Activated CD8-positive, alpha-beta memory T cell treated with anti-CD3 and anti-CD28 coated beads, Interleukin-2, amount 10 ng/mL, durations not matched to agents 7 days and 5 days (primary cell): ENCODE measurements at regions of chr10 and their contacts with region 1.

Region 1: DNA sequence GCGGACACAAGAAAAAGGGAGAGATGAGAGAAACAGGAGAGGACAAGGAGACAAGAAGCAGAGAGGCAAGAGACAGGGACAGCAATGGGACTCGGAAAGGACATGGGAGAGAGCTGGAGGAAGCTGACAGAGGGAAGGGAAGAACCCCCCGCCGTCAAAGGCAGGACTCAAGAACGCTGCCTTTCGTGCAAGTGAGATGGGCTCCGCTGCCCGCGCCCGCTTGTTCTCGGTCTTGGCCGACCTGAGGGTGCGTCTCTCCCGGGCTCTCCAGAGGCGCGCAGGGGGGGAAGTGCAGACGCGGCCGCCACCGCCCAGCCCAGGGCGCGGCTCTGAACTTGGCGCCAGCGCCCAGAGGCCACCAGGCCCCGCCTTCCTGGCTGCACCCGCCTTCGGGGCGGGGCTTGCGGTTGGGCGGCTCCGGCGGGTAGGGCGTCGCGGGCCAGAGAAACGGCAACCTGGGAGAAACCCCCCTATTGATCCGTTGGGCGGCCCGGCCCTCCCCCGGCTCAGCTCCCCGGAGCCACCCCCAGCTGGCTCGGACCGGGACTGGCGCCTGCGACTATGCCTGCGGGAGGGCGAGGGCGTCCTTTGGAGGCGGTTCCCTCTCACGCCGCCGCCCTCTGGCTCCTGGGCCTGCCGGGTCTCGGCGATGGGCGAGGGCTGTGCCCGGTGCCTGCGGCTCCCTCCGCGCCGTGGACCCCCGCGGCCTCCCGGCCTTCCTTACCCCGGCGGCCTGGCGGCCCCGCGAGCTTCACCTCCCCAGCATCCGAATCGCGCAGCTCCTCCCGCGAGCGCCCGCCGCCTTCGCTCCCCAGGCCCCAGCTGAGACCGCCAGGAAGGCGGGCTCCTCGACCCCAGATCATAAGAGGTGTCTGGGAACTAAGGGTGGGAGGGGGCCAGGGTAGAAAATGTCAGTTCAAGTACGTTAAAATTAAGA is 2.2 kb upstream of the ANTXRL start:
- DNase-seq: peak; percentile 91
- ATAC-seq: peak; percentile 87
- H3K4me3 Mint-ChIP-seq: peak overlapping the region; percentile 89
- H3K27ac Mint-ChIP-seq: peak overlapping the region; percentile 89
- H3K4me1 Mint-ChIP-seq: peaks cover 35% of the 10 kb centered on the region
- H3K27me3 Mint-ChIP-seq: peaks cover 16% of the 10 kb centered on the region

Region 2: DNA sequence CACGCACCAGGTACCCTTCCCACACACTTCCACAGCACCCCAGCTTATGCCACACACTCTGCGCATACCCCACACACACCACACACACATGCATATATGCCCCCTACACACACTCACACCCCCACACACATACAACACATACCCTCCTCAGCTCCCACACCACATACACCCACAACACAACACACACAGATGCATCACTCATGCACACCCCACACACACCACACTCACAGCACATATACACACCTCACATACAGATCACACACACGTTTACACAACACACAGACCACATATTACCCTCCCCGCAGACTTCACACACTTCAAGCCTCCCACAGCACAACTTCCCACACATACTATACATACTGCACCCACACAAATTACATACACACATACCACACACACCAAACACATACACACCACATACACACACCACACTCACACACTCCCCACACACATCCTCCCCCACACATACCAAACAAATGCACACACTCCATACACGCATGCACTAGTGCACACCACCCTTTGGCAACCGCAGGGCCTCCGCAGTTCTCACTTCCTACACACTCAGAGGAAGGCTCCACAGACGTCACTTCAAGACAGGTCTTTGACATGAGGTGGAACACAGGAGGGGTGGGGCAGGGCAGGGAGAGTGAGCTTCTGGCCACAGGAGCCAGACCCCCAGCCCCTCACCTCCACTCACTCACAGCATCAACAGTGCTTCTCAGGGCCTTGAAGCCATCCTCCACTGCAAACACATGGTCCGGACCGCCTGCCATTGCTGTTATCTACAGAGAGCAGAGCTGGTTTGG is 16.3 kb before region 1 on chr10:
- CTCF ChIA-PET with region 1: interaction called, 10 read pairs
- DNase-seq: peak; percentile 93
- ATAC-seq: peak; percentile 87
- H3K4me3 Mint-ChIP-seq: no peak overlapping the region
- H3K27ac Mint-ChIP-seq: no peak overlapping the region
- H3K4me1 Mint-ChIP-seq: peaks cover 39% of the 10 kb centered on the region
- H3K27me3 Mint-ChIP-seq: no peaks in the 10 kb centered on the region

Region 3: DNA sequence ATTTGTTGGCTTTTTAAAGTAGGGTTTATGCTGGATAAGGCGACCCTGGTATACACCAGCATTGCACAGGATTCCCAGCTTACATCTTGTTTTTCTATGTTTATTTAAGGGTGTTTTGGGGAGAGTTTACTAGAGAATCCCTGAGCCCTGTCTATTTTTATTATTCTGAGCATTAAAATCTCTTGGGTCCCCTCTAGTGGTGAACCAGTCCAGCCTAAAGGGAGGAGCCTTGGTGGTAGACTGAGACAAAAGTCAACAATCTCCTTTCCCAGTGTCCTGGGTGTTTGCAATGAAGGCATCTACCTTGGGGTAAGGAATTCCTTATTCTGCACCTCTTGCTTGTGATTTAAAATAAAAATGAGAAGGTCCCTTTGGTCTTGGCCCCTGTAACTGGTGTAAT is 40.5 kb after region 1 on chr10:
- CTCF ChIA-PET with region 1: no interaction called
- DNase-seq: no peak
- ATAC-seq: no peak
- H3K4me3 Mint-ChIP-seq: no peak overlapping the region
- H3K27ac Mint-ChIP-seq: no peak overlapping the region
- H3K4me1 Mint-ChIP-seq: no peaks in the 10 kb centered on the region
- H3K27me3 Mint-ChIP-seq: peaks cover 5% of the 10 kb centered on the region